Naive thymus-derived CD8-positive, alpha-beta T cell (primary cell): ENCODE measurements at regions of chr3 and their contacts with region 1.

Region 1: DNA sequence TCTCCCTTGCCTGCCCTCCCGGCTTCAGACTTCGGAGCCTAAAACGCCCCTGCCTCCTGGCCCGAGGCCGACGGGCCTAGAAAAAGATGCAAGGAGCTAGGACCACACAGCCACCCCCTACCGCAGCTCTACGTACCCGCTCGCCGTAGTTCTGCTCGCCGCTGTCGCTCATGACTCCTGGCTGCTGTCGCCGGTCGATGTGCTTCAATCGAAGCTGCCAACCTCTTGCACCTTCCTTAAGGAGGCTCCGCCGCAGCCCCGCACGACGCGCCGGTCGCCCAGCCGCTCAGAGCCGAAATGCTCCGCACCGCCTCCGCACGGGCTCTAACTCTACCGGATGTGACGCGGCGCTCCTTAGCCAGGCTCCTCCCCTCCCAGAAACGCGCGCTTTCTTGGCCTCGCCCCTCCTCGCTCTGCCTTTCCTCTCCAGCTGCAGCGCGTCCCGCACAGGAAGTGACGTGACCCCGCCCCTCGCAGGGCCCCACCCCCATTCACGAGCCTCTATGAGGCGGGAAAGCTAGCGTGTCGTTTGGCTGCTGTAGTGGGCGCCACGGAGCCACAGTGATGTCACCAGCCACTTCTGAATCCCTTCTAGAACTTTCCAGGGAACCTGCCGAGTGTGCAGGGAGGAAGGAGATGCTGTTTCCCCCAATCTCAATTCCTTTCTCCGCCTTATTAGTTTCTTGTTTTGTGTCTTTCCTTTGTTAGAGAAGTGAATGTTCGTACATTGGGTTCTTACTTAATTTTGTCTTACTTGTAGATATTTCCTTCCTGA is at the start of gene TRA2B:
- DNase-seq: peak; percentile 92 to 99 (median 99)
- ATAC-seq: peak; percentile 84 to 88
- H3K4me3 Mint-ChIP-seq: peak within 1 kb of the TSS; percentile 96 to 100 (median 100)
- H3K27ac Mint-ChIP-seq: peak within 1 kb of the TSS; percentile 99 to 100 (median 100)
- H3K4me1 Mint-ChIP-seq: peaks cover 17 to 47% (median 38%) of the 10 kb centered on the region in 4 donors
- H3K27me3 Mint-ChIP-seq: peaks cover 0 to 2% (median 0%) of the 10 kb centered on the region in 5 donors
- polyA plus RNA-seq, gene TRA2B: 176 to 226 (median 184) TPM

Region 2: DNA sequence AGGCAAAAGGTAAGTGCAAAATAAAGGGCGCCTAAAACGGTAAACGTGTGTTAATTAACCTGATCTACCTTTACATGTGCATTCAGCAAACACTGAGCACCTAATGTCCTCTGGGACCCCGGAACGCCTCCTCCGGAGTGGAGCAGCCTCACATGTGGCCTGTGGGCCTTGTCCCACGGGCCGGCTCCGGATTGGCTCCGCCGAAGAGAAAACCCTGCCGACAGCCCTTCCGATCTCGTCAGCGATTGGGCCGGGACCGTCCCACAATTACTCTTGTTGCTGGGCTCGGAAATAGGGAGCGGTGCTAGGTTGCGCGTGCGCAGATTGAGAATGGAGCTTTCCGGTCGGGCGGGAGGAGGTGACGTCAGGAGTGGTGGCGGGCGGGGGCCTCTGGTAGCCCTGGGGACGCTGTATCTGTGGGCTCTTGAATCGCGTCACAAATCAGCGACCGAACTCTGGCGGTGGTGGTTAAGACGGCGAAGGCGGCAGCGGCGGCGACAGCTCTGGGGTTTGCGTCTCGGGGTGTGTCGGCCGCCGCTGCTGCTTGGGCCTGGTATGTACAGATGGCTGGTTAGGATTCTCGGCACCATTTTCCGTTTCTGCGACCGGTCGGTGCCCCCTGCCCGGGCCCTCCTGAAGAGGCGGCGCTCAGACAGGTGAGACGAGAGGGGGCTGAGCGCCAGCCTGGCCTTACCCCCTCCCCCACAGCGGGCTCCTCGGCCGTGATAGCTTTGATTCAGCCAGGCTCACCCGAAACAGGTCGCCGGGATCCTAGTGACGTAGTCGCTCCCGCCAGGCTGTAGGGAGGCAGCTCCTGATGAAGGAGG is 351.8 kb before region 1 on chr3 and contains the start of gene SENP2:
- POLR2A ChIA-PET with region 1: interaction called, 11 read pairs
- DNase-seq: peak; percentile 96 to 100 (median 100)
- ATAC-seq: peak; percentile 92 to 93
- H3K4me3 Mint-ChIP-seq: peak within 1 kb of the TSS; percentile 76 to 94 (median 90)
- H3K27ac Mint-ChIP-seq: peak within 1 kb of the TSS; percentile 87 to 99 (median 96)
- H3K4me1 Mint-ChIP-seq: peaks cover 14 to 42% (median 36%) of the 10 kb centered on the region in 4 donors
- H3K27me3 Mint-ChIP-seq: peaks cover 0 to 3% (median 0%) of the 10 kb centered on the region in 5 donors
- polyA plus RNA-seq, gene SENP2: 12.3 to 13.8 (median 13.8) TPM

Region 3: DNA sequence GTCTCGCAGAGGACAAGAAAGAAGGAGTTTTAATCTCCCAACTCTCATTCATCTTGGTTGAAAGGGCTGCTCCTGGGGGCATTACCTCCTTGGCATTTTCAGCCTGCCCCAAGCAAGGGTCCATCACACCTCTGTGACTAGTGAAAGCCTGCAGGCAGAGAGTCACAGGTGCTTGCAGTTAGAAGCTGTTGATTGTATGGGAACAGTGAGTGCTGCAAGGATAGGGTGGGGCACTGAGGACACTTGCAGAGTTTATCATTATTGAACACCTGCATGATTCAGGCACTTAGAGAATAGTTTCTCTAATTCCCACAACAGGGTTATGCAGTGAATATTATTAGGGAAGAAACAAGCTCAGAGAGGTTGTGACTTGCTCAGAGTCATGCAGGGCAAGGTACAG is 71.3 kb before region 1 on chr3:
- POLR2A ChIA-PET with region 1: no interaction called
- DNase-seq: no peak
- ATAC-seq: no peak
- H3K4me3 Mint-ChIP-seq: no peak overlapping the region
- H3K27ac Mint-ChIP-seq: no peak overlapping the region
- H3K4me1 Mint-ChIP-seq: no peaks in the 10 kb centered on the region
- H3K27me3 Mint-ChIP-seq: peaks cover 4 to 12% (median 8%) of the 10 kb centered on the region in 5 donors

Region 4: GRCh38 chr3:185912929-185913901 is 24.7 kb before region 1 on chr3:
- POLR2A ChIA-PET with region 1: interaction called, 14 read pairs
- DNase-seq: peak in 1 of 10 donors; percentile 9
- ATAC-seq: peak; percentile 23 to 35
- H3K4me3 Mint-ChIP-seq: peak overlapping the region in 1 of 10 donors; percentile 15
- H3K27ac Mint-ChIP-seq: peak overlapping the region in 6 of 10 donors; percentile 20 to 93 (median 45)
- H3K4me1 Mint-ChIP-seq: peaks cover 0 to 11% (median 10%) of the 10 kb centered on the region in 4 donors
- H3K27me3 Mint-ChIP-seq: peaks cover 0 to 2% (median 0%) of the 10 kb centered on the region in 5 donors

Region 5: GRCh38 chr3:185924375-185924774 is 13.5 kb before region 1 on chr3:
- POLR2A ChIA-PET with region 1: interaction called, 23 read pairs
- DNase-seq: no peak
- ATAC-seq: no peak
- H3K4me3 Mint-ChIP-seq: peak overlapping the region in 1 of 10 donors; percentile 43
- H3K27ac Mint-ChIP-seq: peak overlapping the region in 5 of 10 donors; percentile 24 to 52 (median 24)
- H3K4me1 Mint-ChIP-seq: peaks cover 38 to 66% (median 63%) of the 10 kb centered on the region in 4 donors
- H3K27me3 Mint-ChIP-seq: no peaks in the 10 kb centered on the region

Region 6: GRCh38 chr3:186002884-186003472 is 65.1 kb after region 1 on chr3:
- POLR2A ChIA-PET with region 1: no interaction called
- DNase-seq: no peak
- ATAC-seq: no peak
- H3K4me3 Mint-ChIP-seq: no peak overlapping the region
- H3K27ac Mint-ChIP-seq: no peak overlapping the region
- H3K4me1 Mint-ChIP-seq: no peaks in the 10 kb centered on the region
- H3K27me3 Mint-ChIP-seq: peaks cover 8 to 30% (median 12%) of the 10 kb centered on the region in 5 donors

Region 7: GRCh38 chr3:186044973-186045372 is 107.1 kb after region 1 on chr3:
- POLR2A ChIA-PET with region 1: no interaction called
- DNase-seq: no peak
- ATAC-seq: no peak
- H3K4me3 Mint-ChIP-seq: no peak overlapping the region
- H3K27ac Mint-ChIP-seq: no peak overlapping the region
- H3K4me1 Mint-ChIP-seq: no peaks in the 10 kb centered on the region
- H3K27me3 Mint-ChIP-seq: peaks cover 11 to 26% (median 22%) of the 10 kb centered on the region in 5 donors

Region 8: GRCh38 chr3:186057594-186057993 is 119.7 kb after region 1 on chr3:
- POLR2A ChIA-PET with region 1: no interaction called
- DNase-seq: no peak
- ATAC-seq: no peak
- H3K4me3 Mint-ChIP-seq: no peak overlapping the region
- H3K27ac Mint-ChIP-seq: no peak overlapping the region
- H3K4me1 Mint-ChIP-seq: peaks cover 10 to 16% (median 13%) of the 10 kb centered on the region in 4 donors
- H3K27me3 Mint-ChIP-seq: peaks cover 9 to 34% (median 13%) of the 10 kb centered on the region in 5 donors

Region 9: DNA sequence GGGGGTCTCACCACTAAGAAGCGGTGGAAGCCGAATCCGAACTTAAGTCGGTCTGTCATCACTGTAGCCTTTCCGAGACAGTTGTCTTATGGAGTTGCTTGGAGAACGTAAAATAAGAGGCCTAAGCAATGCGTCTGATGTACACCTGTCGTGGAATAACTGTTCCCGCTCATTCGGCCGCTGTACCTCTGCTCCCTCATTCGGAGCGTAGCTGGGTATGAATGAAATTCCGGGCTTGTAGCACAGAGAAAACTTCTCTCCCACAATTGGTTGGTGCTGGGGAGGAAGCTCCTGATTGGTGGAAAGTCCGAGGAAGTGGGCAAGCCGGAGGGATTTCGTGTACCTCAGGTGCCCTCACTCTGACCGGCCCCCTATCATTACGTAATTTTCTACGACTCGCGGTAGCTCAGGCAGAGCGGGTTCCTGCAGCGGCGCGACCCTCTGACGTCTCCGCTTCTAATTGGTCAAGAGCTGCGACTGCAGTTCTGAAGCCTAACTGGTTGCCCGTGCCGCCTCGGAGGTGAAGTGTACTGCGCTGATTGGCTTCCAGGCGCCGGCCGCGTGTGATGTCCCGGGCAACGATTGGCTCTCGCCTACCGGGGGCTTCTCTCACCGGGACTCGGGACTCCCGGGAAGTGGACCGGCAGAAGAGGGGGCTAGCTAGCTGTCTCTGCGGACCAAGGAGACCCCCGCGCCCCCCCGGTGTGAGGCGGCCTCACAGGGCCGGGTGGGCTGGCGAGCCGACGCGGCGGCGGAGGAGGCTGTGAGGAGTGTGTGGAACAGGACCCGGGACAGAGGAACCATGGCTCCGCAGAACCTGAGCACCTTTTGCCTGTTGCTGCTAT is 632.4 kb after region 1 on chr3 and contains the start of gene DNAJB11:
- POLR2A ChIA-PET with region 1: interaction called, 26 read pairs
- DNase-seq: peak; percentile 92 to 99 (median 98)
- ATAC-seq: peak; percentile 84 to 86
- H3K4me3 Mint-ChIP-seq: peak within 1 kb of the TSS; percentile 91 to 99 (median 96)
- H3K27ac Mint-ChIP-seq: peak within 1 kb of the TSS; percentile 78 to 99 (median 98)
- H3K4me1 Mint-ChIP-seq: peaks cover 28 to 65% (median 53%) of the 10 kb centered on the region in 4 donors
- H3K27me3 Mint-ChIP-seq: no peaks in the 10 kb centered on the region
- polyA plus RNA-seq, gene DNAJB11: 31.0 to 41.1 (median 31.4) TPM